Heart left ventricle (tissue), 16 donors: ENCODE measurements at regions of chr7 and their contacts with region 1.

Region 1: GRCh38 chr7:42940985-42941847 is 9.0 kb downstream of the MRPL32 start:
- DNase-seq: peak; percentile 61 to 83 (median 71)
- ATAC-seq: peak in 3 of 4 donors; percentile 67 to 82 (median 73)
- H3K4me3 ChIP-seq: no peak overlapping the region
- H3K27ac ChIP-seq: no peak overlapping the region
- H3K4me1 ChIP-seq: no peaks in the 10 kb centered on the region
- H3K27me3 ChIP-seq: no peaks in the 10 kb centered on the region
- CTCF ChIP-seq: peak; percentile 76 to 89 (median 84)
- POLR2A ChIP-seq: no peak

Region 2: GRCh38 chr7:42869131-42870020 is 71.8 kb before region 1 on chr7:
- intact Hi-C with region 1: no loop called
- DNase-seq: no peak
- ATAC-seq: no peak
- H3K4me3 ChIP-seq: no peak overlapping the region
- H3K27ac ChIP-seq: no peak overlapping the region
- H3K4me1 ChIP-seq: no peaks in the 10 kb centered on the region
- H3K27me3 ChIP-seq: no peaks in the 10 kb centered on the region
- CTCF ChIP-seq: no peak
- POLR2A ChIP-seq: no peak

Region 3: DNA sequence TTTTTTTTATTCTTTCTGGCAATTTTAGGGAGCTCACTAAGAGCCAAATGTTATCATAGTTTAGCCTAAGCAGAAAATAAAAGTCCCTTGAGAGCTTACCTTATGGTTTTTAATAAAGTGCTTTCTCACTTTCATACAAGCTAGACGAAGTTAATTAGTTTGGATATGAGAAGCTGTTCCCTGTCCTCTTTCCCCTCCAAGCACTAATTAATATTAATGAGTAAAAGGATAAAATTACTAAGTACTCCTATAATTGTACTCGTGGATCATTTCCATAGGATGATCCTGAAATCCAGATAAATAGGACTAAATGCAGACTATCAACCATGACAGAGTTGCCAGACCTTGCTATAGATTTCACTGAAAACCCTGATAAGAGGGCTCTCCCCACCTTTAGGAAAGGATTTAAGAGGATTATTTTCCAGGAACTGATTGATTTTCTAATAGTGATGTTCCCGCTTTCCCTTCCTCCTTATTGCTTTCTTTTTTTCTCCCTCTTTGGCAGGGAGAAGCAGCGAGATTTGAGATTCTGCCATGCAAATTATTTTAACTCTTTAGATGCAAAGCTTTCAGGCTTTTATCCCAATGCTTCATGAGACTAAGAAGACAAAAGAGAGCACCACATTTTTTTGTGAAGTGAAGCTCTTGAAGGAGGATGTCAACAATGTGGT is 113.0 kb after region 1 on chr7:
- intact Hi-C with region 1: no loop called
- DNase-seq: no peak
- ATAC-seq: no peak
- H3K4me3 ChIP-seq: no peak overlapping the region
- H3K27ac ChIP-seq: no peak overlapping the region
- H3K4me1 ChIP-seq: no peaks in the 10 kb centered on the region
- H3K27me3 ChIP-seq: peaks cover 0 to 7% (median 0%) of the 10 kb centered on the region in 9 donors
- CTCF ChIP-seq: no peak
- POLR2A ChIP-seq: no peak

Region 4: DNA sequence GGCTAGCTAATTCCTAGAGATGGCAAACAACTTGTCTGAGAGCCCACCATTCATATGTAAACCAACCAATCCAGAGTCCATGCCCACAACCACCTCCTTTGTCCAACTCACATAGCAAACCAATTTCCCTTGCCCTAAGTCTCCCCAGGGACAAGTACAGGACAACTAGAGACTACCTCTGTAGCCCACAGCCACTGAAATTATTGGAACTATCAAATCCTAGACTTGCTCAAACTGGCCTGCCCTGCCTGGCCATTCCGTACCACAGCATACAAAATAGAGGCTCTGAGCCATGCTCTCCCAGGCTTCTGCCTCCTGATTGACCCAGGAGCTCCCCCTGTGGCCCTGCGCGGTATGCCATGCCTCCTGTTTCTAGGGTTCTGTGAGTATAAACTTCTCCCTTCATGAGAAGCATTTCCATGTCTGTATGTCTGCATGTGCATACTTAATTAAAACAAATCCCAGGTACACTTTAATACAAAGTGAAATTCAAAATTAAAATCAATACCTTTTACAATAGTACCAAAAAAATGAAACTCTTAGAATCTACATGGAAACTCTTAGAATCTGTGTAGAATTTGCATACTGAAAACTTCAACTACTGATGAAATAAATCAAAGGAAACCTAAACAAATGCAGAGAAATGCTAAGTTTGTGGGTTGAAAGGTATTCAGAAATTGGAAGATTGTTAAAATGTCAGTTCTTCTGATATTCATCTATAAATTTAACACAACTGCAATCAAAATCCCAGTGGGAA is 167.2 kb after region 1 on chr7:
- intact Hi-C with region 1: loop called in 6 of 10 experiments (anchors 5 to 10 kb)
- DNase-seq: peak in 3 of 5 donors; percentile 23 to 63 (median 56)
- ATAC-seq: peak in 3 of 4 donors; percentile 18 to 87 (median 86)
- H3K4me3 ChIP-seq: no peak overlapping the region
- H3K27ac ChIP-seq: no peak overlapping the region
- H3K4me1 ChIP-seq: peaks cover 0 to 13% (median 9%) of the 10 kb centered on the region in 12 donors
- H3K27me3 ChIP-seq: peaks cover 0 to 55% (median 30%) of the 10 kb centered on the region in 9 donors
- CTCF ChIP-seq: peak; percentile 57 to 79 (median 68)
- POLR2A ChIP-seq: no peak

Region 5: DNA sequence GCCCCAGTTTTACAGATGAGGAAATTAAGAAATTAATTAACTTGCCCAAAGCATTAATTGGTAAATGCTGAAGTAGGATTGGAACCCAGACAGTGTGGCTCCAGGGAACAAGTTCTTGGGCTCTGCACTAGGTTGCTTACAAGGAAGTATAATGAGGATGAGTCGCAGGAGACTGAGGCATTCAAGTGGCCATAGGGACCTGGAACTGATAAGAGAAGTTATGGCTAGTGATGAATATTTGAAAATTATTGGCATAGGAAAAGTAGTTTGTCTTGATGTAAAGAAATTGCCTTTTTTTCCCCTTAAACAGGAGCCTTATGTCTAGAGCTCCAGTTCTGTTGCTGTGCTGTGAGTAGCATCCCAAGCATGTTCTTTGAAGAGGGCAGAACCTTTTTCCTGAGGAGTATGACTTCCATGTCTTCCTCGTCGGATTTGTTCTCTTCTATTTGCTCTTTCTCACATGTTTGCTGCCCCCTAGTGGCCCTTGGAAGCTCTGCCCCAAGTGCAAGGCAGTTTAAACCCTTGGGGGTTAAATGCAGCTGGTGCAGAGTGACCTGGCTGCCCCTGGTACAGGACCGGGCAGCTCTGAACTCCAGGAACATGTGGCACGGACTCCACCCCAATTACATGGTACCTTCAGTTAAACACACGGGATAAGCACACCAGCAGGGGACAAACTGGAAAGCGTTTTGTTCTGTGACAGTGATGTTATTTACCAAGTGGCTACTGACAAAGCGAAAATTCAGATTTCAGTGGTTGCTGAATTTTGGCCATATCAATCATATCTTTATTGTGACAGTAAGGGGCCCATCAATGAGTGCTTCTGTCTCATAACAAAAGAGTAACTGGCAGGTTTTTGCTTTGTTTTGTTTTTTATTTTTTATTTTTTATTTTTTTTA is 320.0 kb after region 1 on chr7:
- intact Hi-C with region 1: loop called (anchors 1 to 5 kb)
- DNase-seq: peak in 4 of 5 donors; percentile 33 to 67 (median 60)
- ATAC-seq: peak in 3 of 4 donors; percentile 59 to 80 (median 78)
- H3K4me3 ChIP-seq: no peak overlapping the region
- H3K27ac ChIP-seq: no peak overlapping the region
- H3K4me1 ChIP-seq: peaks cover 0 to 5% (median 0%) of the 10 kb centered on the region in 12 donors
- H3K27me3 ChIP-seq: peaks cover 0 to 17% (median 0%) of the 10 kb centered on the region in 9 donors
- CTCF ChIP-seq: peak; percentile 82 to 94 (median 90)
- POLR2A ChIP-seq: no peak

Region 6: GRCh38 chr7:43454936-43455518 is 513.8 kb after region 1 on chr7:
- intact Hi-C with region 1: loop called in 5 of 10 experiments (anchors 5 to 10 kb)
- DNase-seq: no peak
- ATAC-seq: peak in 1 of 4 donors; percentile 24
- H3K4me3 ChIP-seq: peak overlapping the region in 1 of 12 donors; percentile 14
- H3K27ac ChIP-seq: no peak overlapping the region
- H3K4me1 ChIP-seq: peaks cover 0 to 6% (median 0%) of the 10 kb centered on the region in 12 donors
- H3K27me3 ChIP-seq: no peaks in the 10 kb centered on the region
- CTCF ChIP-seq: peak in 11 of 12 donors; percentile 8 to 59 (median 37)
- POLR2A ChIP-seq: no peak

Region 7: GRCh38 chr7:43721193-43721806 is 780.1 kb after region 1 on chr7:
- intact Hi-C with region 1: loop called in 4 of 10 experiments (anchors 5 to 10 kb)
- DNase-seq: no peak
- ATAC-seq: no peak
- H3K4me3 ChIP-seq: no peak overlapping the region
- H3K27ac ChIP-seq: no peak overlapping the region
- H3K4me1 ChIP-seq: peaks cover 0 to 18% (median 3%) of the 10 kb centered on the region in 12 donors
- H3K27me3 ChIP-seq: no peaks in the 10 kb centered on the region
- CTCF ChIP-seq: peak; percentile 43 to 78 (median 70)
- POLR2A ChIP-seq: no peak

Region 8: GRCh38 chr7:43729214-43729923 is 788.2 kb after region 1 on chr7 and contains the start of gene COA1:
- intact Hi-C with region 1: loop called in 4 of 10 experiments (anchors 5 to 10 kb)
- DNase-seq: peak; percentile 83 to 91 (median 89)
- ATAC-seq: peak; percentile 98 to 99 (median 99)
- H3K4me3 ChIP-seq: peak within 1 kb of the TSS; percentile 60 to 95 (median 81)
- H3K27ac ChIP-seq: peak within 1 kb of the TSS; percentile 82 to 92 (median 88)
- H3K4me1 ChIP-seq: peaks cover 0 to 42% (median 19%) of the 10 kb centered on the region in 12 donors
- H3K27me3 ChIP-seq: no peaks in the 10 kb centered on the region
- CTCF ChIP-seq: peak in 1 of 12 donors; percentile 19
- POLR2A ChIP-seq: peak in 1 of 2 donors; percentile 57
- total RNA-seq, gene COA1: 57.5 to 81.2 (median 68.2) TPM

Region 9: GRCh38 chr7:43834463-43835251 is 893.4 kb after region 1 on chr7:
- intact Hi-C with region 1: loop called in 2 of 10 experiments (anchors 10 kb)
- DNase-seq: no peak
- ATAC-seq: peak in 1 of 4 donors; percentile 34
- H3K4me3 ChIP-seq: peak overlapping the region in 9 of 12 donors; percentile 18 to 43 (median 35)
- H3K27ac ChIP-seq: peak overlapping the region in 1 of 12 donors; percentile 46
- H3K4me1 ChIP-seq: peaks cover 0 to 21% (median 0%) of the 10 kb centered on the region in 12 donors
- H3K27me3 ChIP-seq: peaks cover 0 to 5% (median 0%) of the 10 kb centered on the region in 9 donors
- CTCF ChIP-seq: no peak
- POLR2A ChIP-seq: no peak